ENCODE measurements at regions of chr20 and their contacts with region 1.

Region 1: DNA sequence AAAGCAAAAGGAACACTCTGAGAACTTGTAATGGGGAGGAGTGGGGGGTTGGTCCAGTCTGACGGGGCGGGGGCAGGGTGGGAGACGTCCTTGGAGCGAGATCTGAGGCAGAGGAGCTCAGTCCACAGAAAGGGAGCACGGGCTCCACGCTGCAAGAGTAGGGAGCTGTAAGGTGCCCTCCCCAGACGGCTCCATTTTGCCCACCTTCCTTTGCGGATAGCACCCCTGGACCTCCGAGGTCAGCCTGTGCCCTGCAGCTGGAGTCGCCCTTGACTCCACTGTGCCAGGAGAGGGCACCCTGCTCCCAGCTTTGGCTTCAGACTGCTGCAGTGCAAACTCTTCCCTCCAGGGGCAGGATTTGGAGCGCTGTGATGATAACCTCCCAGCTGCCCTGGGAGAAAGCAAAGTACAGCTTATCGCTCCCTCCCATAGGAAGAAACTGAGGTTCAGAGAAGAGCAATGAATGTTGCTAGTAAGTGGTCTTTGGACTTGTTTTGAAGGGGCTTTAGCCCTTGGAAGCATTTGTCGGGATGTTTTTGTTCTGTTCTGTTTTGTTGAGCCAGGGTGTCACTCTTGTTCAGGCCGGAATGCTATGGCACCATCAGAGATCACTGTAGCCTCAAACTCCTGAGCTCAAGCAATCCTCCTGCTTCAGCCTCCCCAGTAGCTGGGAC is 9.5 kb upstream of the AHCY start:
- DNase-seq: peak; percentile 87
- ATAC-seq: peak; percentile 99

Region 2: GRCh38 chr20:34468951-34469350 is 156.3 kb after region 1 on chr20:
- intact Hi-C with region 1: loop called (anchors 10 kb)
- DNase-seq: no peak
- ATAC-seq: no peak

Region 3: DNA sequence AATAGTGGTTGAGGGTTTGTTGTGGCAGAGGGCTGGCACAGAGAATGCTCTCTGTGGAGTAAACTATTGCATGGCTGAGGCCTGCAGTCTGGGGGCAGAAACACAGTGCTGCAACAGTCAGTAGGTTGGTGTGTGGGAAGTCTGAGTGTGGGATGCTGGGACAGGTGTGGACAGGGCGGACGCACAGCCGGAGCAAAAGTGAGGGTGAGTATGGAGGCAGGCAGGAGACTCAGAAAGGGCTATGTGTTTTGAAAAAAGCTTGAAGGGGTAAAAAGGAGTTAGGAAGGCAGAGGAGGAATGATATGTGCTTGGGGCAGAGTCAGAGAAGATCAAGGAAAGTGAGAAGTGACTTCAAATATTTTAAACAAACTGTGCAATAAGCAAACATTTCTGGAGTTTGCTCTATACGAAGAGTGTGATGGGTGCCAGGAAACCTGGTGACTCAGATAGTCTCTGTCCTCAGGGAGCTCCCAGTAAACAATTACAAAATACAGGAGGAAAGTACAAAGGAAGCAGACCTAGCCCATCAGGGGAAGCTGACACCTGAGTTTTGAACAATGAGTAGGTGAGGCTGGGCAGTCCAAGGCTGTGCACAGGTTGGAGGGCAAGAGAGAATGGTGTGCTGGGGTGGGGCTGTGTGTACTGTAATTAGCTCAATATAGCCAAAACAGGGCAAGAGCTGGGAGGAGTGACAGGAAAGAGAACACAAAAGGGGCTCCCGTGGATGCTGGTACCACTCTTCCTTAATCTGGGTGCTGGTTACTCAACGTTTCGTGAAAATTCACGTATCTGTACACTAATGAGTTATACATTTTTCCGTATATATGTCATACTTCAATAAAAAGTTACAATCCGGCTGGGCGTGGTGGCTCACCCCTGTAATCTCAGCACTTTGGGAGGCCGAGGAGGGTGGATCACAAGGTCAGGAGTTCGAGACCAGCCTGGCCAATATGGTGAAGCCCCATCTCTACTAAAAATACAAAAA is 309.0 kb after region 1 on chr20:
- intact Hi-C with region 1: no loop called
- DNase-seq: no peak
- ATAC-seq: no peak

Measured in left ventricle myocardium superior (tissue), 1 donor.